Activated CD4-positive, alpha-beta T cell treated with anti-CD3 and anti-CD28 coated beads for 36 hours (primary cell): ENCODE measurements at regions of chr6 and their contacts with region 1.

Region 1: GRCh38 chr6:32522302-32523047 is 7.6 kb downstream of the HLA-DRB5 start:
- DNase-seq: no peak
- ATAC-seq: no peak
- H3K4me3 Mint-ChIP-seq: no peak overlapping the region
- H3K27ac Mint-ChIP-seq: no peak overlapping the region
- H3K4me1 Mint-ChIP-seq: no peaks in the 10 kb centered on the region
- H3K27me3 Mint-ChIP-seq: no peaks in the 10 kb centered on the region

Region 2: DNA sequence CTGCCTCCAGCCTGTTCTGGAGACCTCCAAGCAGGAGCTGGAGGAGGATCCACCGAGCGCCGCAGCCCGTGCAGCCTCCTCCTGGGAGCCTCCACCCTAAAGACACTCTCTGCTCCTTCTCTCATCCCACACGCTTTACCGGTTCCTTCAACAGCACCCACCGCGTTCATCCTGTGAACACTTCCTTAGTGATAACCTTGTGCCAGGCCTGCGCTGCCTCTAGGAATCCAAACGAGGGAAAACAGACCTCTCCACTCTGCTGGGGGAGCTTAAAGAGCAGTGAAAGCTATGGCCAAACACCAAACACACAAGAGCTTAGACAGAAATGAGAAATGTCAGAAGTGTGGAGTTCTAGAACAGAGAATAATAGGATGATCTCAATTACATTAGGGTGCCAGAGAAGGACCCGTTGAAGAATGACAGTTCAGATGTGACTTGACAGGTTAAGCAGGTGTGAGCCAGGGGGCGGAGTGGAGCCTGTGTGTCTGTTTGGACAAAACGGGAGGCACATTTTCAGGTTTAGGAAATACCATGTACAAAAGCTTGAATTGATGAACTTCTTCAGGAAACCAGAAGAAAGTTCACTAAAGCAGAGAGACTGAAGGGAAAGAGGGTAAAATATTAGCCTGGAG is 36.1 kb after region 1 on chr6:
- CTCF ChIA-PET with region 1: no interaction called
- POLR2A ChIA-PET with region 1: interaction called, 4 read pairs
- intact Hi-C with region 1: loop called in 1 of 2 experiments (anchors 2 kb)
- DNase-seq: peak; percentile 6
- ATAC-seq: no peak
- H3K4me3 Mint-ChIP-seq: no peak overlapping the region
- H3K27ac Mint-ChIP-seq: no peak overlapping the region
- H3K4me1 Mint-ChIP-seq: no peaks in the 10 kb centered on the region
- H3K27me3 Mint-ChIP-seq: peaks cover 10% of the 10 kb centered on the region